Thyroid gland (tissue), 4 donors: ENCODE measurements at regions of chr17 and their contacts with region 1.

Region 1: DNA sequence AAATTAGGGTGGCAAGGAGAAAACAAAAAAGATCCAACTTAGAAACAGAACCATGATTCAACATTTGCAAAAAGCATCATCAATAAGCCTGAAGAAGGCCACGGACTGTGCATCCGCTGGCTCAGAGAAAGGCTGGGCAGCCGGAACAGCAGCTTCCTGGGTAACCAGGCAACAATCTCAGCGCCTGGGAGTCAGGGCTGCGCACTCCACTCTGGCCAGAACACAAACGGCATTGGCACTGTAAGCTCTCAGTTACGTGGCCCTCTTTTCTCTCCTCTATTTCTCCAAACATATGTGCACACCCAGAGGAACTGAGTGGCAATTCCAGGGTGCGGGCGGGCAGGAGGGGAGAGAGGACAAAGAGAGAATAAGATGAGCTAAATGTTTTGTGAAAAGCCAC is 6.4 kb upstream of the GHDC start:
- DNase-seq: peak in 1 of 2 donors; percentile 12
- H3K4me3 ChIP-seq: no peak overlapping the region
- H3K27ac ChIP-seq: peak overlapping the region in 1 of 3 donors; percentile 3
- H3K4me1 ChIP-seq: peaks cover 14 to 23% of the 10 kb centered on the region in 2 donors
- H3K27me3 ChIP-seq: no peaks in the 10 kb centered on the region
- CTCF ChIP-seq: no peak
- POLR2A ChIP-seq: no peak

Region 2: GRCh38 chr17:42153919-42154742 is 46.6 kb before region 1 on chr17:
- intact Hi-C with region 1: loop called (anchors 10 kb)
- DNase-seq: no peak
- H3K4me3 ChIP-seq: peak overlapping the region; percentile 65 to 91 (median 86)
- H3K27ac ChIP-seq: peak overlapping the region; percentile 47 to 68 (median 57)
- H3K4me1 ChIP-seq: peaks cover 24 to 28% of the 10 kb centered on the region in 2 donors
- H3K27me3 ChIP-seq: no peaks in the 10 kb centered on the region
- CTCF ChIP-seq: no peak
- POLR2A ChIP-seq: no peak